ENCODE measurements at regions of chr3 and their contacts with region 1.

Region 1: GRCh38 chr3:138594150-138594934 is at the start of gene CEP70:
- DNase-seq: peak; percentile 90
- H3K4me3 Mint-ChIP-seq: peak within 1 kb of the TSS; percentile 96
- H3K27ac Mint-ChIP-seq: peak within 1 kb of the TSS; percentile 87
- H3K4me1 Mint-ChIP-seq: peaks cover 4% of the 10 kb centered on the region
- H3K27me3 Mint-ChIP-seq: no peaks in the 10 kb centered on the region
- total RNA-seq, gene CEP70: 16.3 to 20.4 TPM

Region 2: GRCh38 chr3:138068579-138069174 is 525.7 kb before region 1 on chr3:
- CTCF ChIA-PET with region 1: interaction called, 4 read pairs
- intact Hi-C with region 1: loop called (anchors 5 kb)
- DNase-seq: peak; percentile 87
- H3K4me3 Mint-ChIP-seq: no peak overlapping the region
- H3K27ac Mint-ChIP-seq: no peak overlapping the region
- H3K4me1 Mint-ChIP-seq: peaks cover 6% of the 10 kb centered on the region
- H3K27me3 Mint-ChIP-seq: peaks cover 10% of the 10 kb centered on the region

Region 3: GRCh38 chr3:138434276-138434874 is 160.0 kb before region 1 on chr3 and contains the start of gene ESYT3:
- CTCF ChIA-PET with region 1: interaction called, 7 read pairs
- intact Hi-C with region 1: loop called (anchors 1 kb)
- DNase-seq: peak; percentile 82
- H3K4me3 Mint-ChIP-seq: peak within 1 kb of the TSS; percentile 75
- H3K27ac Mint-ChIP-seq: no peak within 1 kb of the TSS
- H3K4me1 Mint-ChIP-seq: peaks cover 11% of the 10 kb centered on the region
- H3K27me3 Mint-ChIP-seq: peaks cover 55% of the 10 kb centered on the region
- total RNA-seq, gene ESYT3: 0.96 to 1.1 TPM

Region 4: DNA sequence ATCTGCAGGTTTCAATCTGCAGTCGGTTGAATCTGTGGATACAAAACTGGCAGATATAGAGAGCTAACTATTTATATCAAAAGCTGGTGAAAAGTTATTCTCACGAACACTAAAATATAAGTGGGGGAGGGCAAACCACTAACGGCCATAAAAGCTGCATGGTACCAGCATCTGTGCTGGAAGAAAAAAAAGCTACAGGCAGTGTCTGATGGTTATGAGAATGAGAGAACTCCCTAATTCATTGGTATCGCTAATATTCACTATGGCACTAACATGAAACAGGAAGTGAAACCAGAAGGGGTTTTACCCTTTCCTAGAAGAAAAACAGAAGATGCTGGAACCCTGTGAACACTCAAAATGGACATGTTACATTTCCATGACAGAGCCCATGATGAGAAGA is 16.2 kb before region 1 on chr3:
- CTCF ChIA-PET with region 1: interaction called, 27 read pairs
- intact Hi-C with region 1: no loop called
- DNase-seq: no peak
- H3K4me3 Mint-ChIP-seq: no peak overlapping the region
- H3K27ac Mint-ChIP-seq: no peak overlapping the region
- H3K4me1 Mint-ChIP-seq: peaks cover 25% of the 10 kb centered on the region
- H3K27me3 Mint-ChIP-seq: no peaks in the 10 kb centered on the region

Region 5: GRCh38 chr3:138694287-138695007 is 100.1 kb after region 1 on chr3:
- CTCF ChIA-PET with region 1: interaction called, 10 read pairs
- intact Hi-C with region 1: loop called (anchors 1 kb)
- DNase-seq: no peak
- H3K4me3 Mint-ChIP-seq: no peak overlapping the region
- H3K27ac Mint-ChIP-seq: no peak overlapping the region
- H3K4me1 Mint-ChIP-seq: peaks cover 3% of the 10 kb centered on the region
- H3K27me3 Mint-ChIP-seq: no peaks in the 10 kb centered on the region

Region 6: GRCh38 chr3:138923531-138923994 is 329.2 kb after region 1 on chr3:
- CTCF ChIA-PET with region 1: interaction called, 192 read pairs
- intact Hi-C with region 1: loop called (anchors 1 kb)
- DNase-seq: peak; percentile 94
- H3K4me3 Mint-ChIP-seq: no peak overlapping the region
- H3K27ac Mint-ChIP-seq: no peak overlapping the region
- H3K4me1 Mint-ChIP-seq: no peaks in the 10 kb centered on the region
- H3K27me3 Mint-ChIP-seq: peaks cover 2% of the 10 kb centered on the region

Measured in activated naive CD4-positive, alpha-beta T cell treated with anti-CD3 and anti-CD28 coated beads for 36 hours (primary cell).